ENCODE measurements at regions of chr16 and their contacts with region 1.

Region 1: GRCh38 chr16:27367461-27368357 is 34.3 kb upstream of the IL21R start:
- DNase-seq: peak; percentile 63
- ATAC-seq: peak; percentile 92
- H3K4me3 ChIP-seq: no peak overlapping the region
- H3K27ac ChIP-seq: no peak overlapping the region
- H3K4me1 ChIP-seq: peaks cover 2 to 37% of the 10 kb centered on the region in 2 experiments; a peak in 3 of 4 replicates
- H3K27me3 ChIP-seq: no peaks in the 10 kb centered on the region
- CTCF ChIP-seq: peak; percentile 74 to 82 (median 82)
- POLR2A ChIP-seq: no peak
- RAD21 ChIP-seq: peak; percentile 95

Region 2: DNA sequence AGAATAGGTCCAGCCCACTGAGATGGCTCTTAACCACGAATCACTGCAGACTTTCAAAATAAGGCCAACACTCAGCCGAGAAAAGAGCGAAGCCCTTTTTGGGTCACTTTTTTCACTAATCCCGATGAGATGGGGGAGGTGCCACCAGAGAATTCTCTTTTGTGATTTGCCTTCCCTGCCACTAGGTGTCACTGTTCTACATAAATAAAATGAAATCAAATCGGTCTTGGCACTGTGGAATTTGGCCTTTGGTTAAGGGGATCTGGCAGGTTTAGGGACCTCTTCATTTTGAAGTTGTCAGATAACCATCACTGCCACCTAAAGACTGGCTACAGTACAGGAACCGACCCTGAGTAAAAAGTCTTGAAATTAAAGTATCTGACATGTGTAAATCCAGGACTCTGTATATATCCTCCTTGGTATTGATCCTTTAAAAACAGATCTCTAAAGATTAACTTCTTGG is 1529.0 kb before region 1 on chr16:
- CTCF ChIA-PET with region 1: no interaction called
- POLR2A ChIA-PET with region 1: no interaction called
- RAD21 ChIA-PET with region 1: no interaction called
- intact Hi-C with region 1: loop called (anchors 5 kb)
- DNase-seq: peak; percentile 27
- ATAC-seq: peak; percentile 57
- H3K4me3 ChIP-seq: no peak overlapping the region
- H3K27ac ChIP-seq: no peak overlapping the region
- H3K4me1 ChIP-seq: no peaks in the 10 kb centered on the region
- H3K27me3 ChIP-seq: no peaks in the 10 kb centered on the region
- CTCF ChIP-seq: peak; percentile 31 to 77 (median 61); a peak in 5 of 6 replicates
- POLR2A ChIP-seq: no peak
- RAD21 ChIP-seq: peak; percentile 60

Region 3: GRCh38 chr16:27080870-27081269 is 286.8 kb before region 1 on chr16:
- CTCF ChIA-PET with region 1: no interaction called
- POLR2A ChIA-PET with region 1: no interaction called
- RAD21 ChIA-PET with region 1: no interaction called
- intact Hi-C with region 1: no loop called
- DNase-seq: peak; percentile 29
- ATAC-seq: peak; percentile 91
- H3K4me3 ChIP-seq: no peak overlapping the region
- H3K27ac ChIP-seq: no peak overlapping the region
- H3K4me1 ChIP-seq: no peaks in the 10 kb centered on the region
- H3K27me3 ChIP-seq: peaks cover 21% of the 10 kb centered on the region
- CTCF ChIP-seq: peak; percentile 16 to 78 (median 71); a peak in 5 of 6 replicates
- POLR2A ChIP-seq: no peak
- RAD21 ChIP-seq: peak; percentile 39

Region 4: GRCh38 chr16:27154705-27155521 is 212.8 kb before region 1 on chr16:
- CTCF ChIA-PET with region 1: interaction called, 12 read pairs
- POLR2A ChIA-PET with region 1: no interaction called
- RAD21 ChIA-PET with region 1: no interaction called
- intact Hi-C with region 1: loop called (anchors 1 kb)
- DNase-seq: peak; percentile 56
- ATAC-seq: peak; percentile 94
- H3K4me3 ChIP-seq: peak overlapping the region; percentile 36 to 40
- H3K27ac ChIP-seq: no peak overlapping the region
- H3K4me1 ChIP-seq: peaks cover 0 to 9% of the 10 kb centered on the region in 2 experiments; a peak in 2 of 4 replicates
- H3K27me3 ChIP-seq: no peaks in the 10 kb centered on the region
- CTCF ChIP-seq: peak; percentile 71 to 99 (median 98)
- POLR2A ChIP-seq: no peak
- RAD21 ChIP-seq: peak; percentile 71

Region 5: DNA sequence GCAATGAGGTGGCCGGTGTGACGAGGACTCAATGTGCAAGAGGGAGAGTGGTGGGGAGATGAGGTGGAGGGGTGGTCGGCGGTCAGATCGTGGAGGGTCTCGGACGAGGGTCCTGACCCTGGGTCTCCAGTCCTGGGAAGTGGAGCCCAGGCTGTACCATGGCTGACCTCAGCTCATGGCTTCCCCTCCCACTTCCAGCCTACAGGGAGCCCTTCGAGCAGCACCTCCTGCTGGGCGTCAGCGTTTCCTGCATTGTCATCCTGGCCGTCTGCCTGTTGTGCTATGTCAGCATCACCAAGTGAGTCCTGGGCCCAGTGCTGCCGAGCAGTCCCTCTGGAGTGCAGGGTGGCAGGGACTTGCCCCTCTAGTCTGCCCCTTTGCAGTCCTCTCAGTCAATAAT is 12.1 kb before region 1 on chr16:
- CTCF ChIA-PET with region 1: interaction called, 10 read pairs
- POLR2A ChIA-PET with region 1: no interaction called
- RAD21 ChIA-PET with region 1: no interaction called
- intact Hi-C with region 1: no loop called
- DNase-seq: peak; percentile 19
- ATAC-seq: peak; percentile 89
- H3K4me3 ChIP-seq: no peak overlapping the region
- H3K27ac ChIP-seq: no peak overlapping the region
- H3K4me1 ChIP-seq: no peaks in the 10 kb centered on the region
- H3K27me3 ChIP-seq: no peaks in the 10 kb centered on the region
- CTCF ChIP-seq: peak; percentile 35 to 72 (median 67); a peak in 5 of 6 replicates
- POLR2A ChIP-seq: no peak
- RAD21 ChIP-seq: peak; percentile 52